ENCODE measurements at regions of chr11 and their contacts with region 1.

Region 1: DNA sequence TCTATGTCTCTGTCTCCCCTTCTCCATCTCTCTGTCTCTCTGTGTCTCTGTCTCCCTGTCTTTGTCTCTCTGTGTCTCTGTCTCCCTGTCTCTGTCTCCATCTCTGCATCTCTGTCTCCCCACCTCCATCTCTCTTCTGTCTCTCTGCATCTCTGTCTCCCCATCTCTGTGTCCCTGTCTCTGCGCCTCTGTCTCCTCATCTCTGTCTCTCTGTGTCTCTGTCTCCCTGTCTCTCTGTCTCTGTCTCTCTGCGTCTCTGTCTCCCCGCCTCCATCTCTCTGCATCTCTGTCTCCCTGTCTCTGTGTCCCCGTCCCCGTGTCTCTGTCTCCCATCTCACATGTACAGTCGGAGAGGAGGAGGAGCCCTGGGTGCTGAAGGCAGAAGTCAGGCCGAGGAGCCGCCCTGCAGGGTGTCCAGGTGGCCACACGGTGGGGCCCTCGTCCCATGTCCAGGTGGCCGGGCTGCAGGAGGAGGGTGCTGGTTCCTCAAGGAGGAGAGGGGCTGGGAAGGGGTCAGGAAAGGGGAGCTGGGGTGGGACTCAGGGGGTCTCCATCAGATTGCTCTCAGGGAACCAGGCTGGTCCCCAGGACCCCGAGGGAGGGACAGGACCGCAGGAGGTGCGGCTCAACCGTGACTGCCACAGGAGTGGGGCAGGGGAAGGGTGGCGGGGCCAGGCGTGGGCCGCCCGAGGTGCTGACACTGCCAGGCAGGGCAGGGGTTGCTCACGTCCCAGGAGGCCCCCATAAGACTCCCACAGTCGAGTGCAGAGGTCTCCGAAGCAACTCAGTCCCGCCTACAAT is 25.6 kb upstream of the TH start:
- DNase-seq: peak; percentile 89
- ATAC-seq: peak; percentile 76

Region 2: DNA sequence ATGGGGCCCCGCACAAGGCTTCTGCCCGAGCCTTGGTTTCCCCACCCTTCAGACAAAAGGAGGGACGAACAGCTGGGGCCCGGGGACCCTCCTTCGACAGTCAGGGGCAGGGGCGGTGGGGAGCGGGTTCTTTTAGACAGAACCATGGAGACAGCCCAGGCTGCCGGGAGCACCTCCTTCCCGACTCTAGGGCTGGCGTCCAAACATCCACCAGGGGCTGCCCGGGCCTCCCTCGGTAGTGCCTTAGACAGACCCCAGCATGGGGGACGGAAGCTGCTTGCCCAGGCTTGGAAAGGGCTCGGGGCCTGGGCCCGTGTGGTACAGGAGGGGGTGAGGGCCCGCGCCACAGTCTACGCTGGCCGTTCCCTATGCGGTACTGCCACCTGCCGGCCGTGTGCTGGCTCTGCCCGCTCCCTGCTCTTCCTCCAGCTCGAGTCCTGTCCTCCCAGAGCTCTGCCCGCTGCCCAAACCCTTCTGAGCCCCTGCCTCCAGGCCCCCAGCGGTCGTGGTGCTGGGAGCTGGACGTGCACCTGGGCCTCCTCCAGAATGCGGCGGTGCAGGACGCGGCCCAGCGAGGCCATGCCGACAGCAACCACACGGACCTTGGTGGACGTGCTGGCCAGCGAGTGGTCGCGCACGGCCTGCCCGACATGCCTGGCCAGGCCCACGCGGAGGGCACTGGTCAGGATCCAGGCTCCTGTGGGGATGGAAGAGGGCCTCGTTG is 223.5 kb after region 1 on chr11:
- intact Hi-C with region 1: loop called (anchors 1 kb)
- DNase-seq: peak; percentile 89
- ATAC-seq: peak; percentile 95

Region 3: DNA sequence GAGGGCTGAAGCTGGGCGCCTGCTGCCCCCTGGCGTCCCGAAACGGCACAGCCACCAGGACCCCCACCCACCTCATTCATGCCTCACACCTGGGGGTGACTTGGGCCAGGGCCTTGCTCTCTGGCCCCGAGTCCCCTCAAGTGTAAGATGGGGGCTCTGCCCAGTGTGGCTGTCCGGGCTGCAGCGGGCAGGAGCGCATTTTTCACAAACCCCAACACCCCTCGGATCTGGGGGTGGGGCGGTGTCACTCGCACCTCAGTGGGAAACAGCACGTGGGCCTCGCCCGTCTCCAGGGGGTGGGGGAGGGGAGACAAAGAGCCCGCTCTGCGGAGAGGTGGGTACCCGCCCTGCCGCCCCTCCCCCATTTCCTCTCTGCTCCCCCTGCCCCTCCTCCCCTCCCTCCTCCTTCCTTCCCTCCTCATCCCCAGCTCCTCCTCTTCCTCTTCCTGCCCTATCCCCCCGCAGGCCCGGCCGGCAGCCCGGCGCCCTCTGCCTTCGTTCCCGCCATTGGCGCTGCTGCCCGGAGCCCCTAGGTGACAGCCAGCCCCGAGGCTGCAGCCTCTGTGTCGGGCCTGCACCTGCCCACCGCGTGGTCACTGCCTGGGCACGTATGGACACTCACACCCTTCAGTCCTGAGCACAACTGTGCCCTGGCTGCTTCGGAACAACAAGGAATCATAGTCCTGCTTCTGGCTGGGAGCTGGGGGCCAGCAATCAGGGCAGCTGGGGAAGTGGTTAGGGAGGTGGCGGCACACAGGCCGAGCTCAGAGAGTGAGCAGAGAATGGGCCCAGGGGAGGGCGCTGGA is 695.2 kb after region 1 on chr11:
- intact Hi-C with region 1: loop called (anchors 10 kb)
- DNase-seq: peak; percentile 83
- ATAC-seq: peak; percentile 40